ENCODE measurements at regions of chr11 and their contacts with region 1.

Region 1: GRCh38 chr11:112062923-112063322 is 10.9 kb downstream of the PIH1D2 start:
- DNase-seq: no peak
- H3K4me3 ChIP-seq: no peak overlapping the region
- H3K27ac ChIP-seq: no peak overlapping the region
- H3K4me1 ChIP-seq: no peaks in the 10 kb centered on the region
- H3K27me3 ChIP-seq: no peaks in the 10 kb centered on the region
- CTCF ChIP-seq: no peak

Region 2: DNA sequence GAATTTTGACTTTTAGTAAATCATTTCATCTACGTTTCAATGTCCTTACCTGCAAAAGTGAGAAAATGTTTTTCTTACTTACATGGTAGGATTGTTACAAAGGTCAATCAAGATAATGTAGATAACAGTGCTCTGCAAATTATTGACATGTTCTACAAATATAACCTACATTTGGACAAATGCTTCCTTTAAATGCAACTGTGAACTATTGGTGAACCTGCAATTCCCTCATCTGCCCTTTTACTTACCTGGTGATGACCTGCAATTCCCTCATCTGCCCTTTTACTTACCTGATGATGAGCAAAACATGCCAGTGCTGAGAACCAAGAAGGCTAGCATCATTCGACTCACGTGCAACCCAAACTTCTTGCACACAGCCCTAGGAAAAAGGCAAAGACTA is 202.7 kb before region 1 on chr11:
- CTCF ChIA-PET with region 1: interaction called, 13 read pairs
- POLR2A ChIA-PET with region 1: no interaction called
- intact Hi-C with region 1: no loop called
- DNase-seq: no peak
- H3K4me3 ChIP-seq: no peak overlapping the region
- H3K27ac ChIP-seq: no peak overlapping the region
- H3K4me1 ChIP-seq: no peaks in the 10 kb centered on the region
- H3K27me3 ChIP-seq: no peaks in the 10 kb centered on the region
- CTCF ChIP-seq: no peak

Region 3: GRCh38 chr11:111960916-111961315 is 102.0 kb before region 1 on chr11:
- CTCF ChIA-PET with region 1: no interaction called
- POLR2A ChIA-PET with region 1: no interaction called
- intact Hi-C with region 1: no loop called
- DNase-seq: peak; percentile 36 to 87
- H3K4me3 ChIP-seq: no peak overlapping the region
- H3K27ac ChIP-seq: no peak overlapping the region; the same call in 1 of the 2 replicates
- H3K4me1 ChIP-seq: peaks cover 8% of the 10 kb centered on the region
- H3K27me3 ChIP-seq: no peaks in the 10 kb centered on the region
- CTCF ChIP-seq: no peak

Region 4: DNA sequence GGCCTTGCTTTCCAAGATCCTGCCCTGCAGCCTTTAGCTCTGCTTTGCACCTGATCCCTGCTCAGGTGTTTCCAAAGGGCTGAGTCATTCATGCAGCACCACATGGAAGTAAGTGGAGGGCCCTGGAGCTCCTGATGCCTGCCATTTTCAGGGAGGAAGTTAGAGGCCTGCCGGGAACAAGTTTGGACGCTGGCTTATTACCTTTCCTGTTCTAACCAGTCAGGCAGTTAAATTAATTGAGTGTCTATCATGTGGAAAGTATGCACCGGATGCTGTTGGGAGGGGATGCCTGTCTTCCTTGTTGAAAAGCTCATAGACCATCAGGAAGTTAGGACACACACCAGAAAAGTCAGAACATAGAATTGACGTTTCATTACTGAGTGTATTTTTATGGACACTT is 271.5 kb after region 1 on chr11:
- CTCF ChIA-PET with region 1: no interaction called
- POLR2A ChIA-PET with region 1: interaction called, 19 read pairs
- intact Hi-C with region 1: no loop called
- DNase-seq: peak; percentile 14 to 39
- H3K4me3 ChIP-seq: no peak overlapping the region
- H3K27ac ChIP-seq: no peak overlapping the region
- H3K4me1 ChIP-seq: no peaks in the 10 kb centered on the region
- H3K27me3 ChIP-seq: peaks cover 7% of the 10 kb centered on the region
- CTCF ChIP-seq: no peak